Calu3 (cell line): ENCODE measurements at regions of chr9 and their contacts with region 1.

Region 1: DNA sequence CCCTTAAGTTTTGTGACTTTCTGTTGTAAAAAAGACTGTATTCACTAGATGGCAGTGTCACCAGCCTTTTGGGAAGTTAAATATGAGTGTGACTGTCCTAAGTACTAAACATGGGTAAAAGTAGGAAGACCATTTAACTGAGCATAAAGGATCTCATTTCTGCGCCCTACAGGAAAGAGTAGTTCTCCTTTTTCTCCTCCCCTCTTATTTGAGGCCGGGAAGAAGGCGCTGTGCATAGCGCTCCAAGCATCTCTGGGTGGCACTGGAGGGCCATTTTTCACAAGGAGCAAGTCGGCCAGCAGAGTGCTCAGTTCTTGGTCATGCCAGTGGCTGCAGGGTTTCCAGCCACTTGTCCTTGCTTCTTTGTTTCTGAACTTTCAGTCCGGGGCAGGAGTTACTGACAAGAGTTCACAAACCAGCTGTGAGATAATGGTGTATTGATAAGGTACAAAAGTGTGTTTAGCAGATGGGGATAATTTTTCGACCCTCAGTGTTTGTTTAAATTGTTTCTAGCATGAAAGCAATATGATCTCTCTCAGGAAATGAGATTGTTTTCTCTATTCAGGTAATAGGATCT is 227.6 kb upstream of the DMRT1 start:
- DNase-seq: peak; percentile 61
- H3K4me3 Mint-ChIP-seq: peak overlapping the region; percentile 28
- H3K27ac Mint-ChIP-seq: peak overlapping the region; percentile 61
- H3K4me1 Mint-ChIP-seq: no peaks in the 10 kb centered on the region
- H3K27me3 Mint-ChIP-seq: no peaks in the 10 kb centered on the region
- CTCF ChIP-seq: peak; percentile 41

Region 2: GRCh38 chr9:385818-386398 is 228.0 kb before region 1 on chr9:
- CTCF ChIA-PET with region 1: no interaction called
- intact Hi-C with region 1: loop called (anchors 2 kb)
- DNase-seq: peak; percentile 49
- H3K4me3 Mint-ChIP-seq: no peak overlapping the region
- H3K27ac Mint-ChIP-seq: no peak overlapping the region
- H3K4me1 Mint-ChIP-seq: no peaks in the 10 kb centered on the region
- H3K27me3 Mint-ChIP-seq: peaks cover 8% of the 10 kb centered on the region
- CTCF ChIP-seq: peak; percentile 64

Region 3: DNA sequence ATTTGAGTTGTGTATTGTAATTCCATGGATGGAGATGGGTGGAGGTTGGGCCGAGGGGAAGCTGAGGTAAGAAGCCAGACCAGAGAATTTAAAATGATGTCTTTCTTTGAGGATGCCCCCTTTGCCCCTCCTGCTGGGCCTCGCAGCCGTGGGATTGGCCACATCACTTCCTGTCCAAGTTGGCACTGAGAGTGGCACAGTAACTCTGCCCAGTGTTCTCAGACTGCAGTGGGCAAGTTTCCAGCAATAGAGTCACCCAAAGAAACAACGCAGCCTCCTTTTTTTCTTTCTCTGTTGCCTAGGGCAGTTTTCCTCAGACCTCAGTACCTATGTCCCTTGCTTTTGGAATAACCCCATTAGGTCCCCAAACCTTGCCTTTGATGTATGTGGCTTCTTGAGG is 79.0 kb before region 1 on chr9:
- CTCF ChIA-PET with region 1: no interaction called
- intact Hi-C with region 1: no loop called
- DNase-seq: no peak
- H3K4me3 Mint-ChIP-seq: no peak overlapping the region
- H3K27ac Mint-ChIP-seq: no peak overlapping the region
- H3K4me1 Mint-ChIP-seq: no peaks in the 10 kb centered on the region
- H3K27me3 Mint-ChIP-seq: no peaks in the 10 kb centered on the region
- CTCF ChIP-seq: no peak

Region 4: DNA sequence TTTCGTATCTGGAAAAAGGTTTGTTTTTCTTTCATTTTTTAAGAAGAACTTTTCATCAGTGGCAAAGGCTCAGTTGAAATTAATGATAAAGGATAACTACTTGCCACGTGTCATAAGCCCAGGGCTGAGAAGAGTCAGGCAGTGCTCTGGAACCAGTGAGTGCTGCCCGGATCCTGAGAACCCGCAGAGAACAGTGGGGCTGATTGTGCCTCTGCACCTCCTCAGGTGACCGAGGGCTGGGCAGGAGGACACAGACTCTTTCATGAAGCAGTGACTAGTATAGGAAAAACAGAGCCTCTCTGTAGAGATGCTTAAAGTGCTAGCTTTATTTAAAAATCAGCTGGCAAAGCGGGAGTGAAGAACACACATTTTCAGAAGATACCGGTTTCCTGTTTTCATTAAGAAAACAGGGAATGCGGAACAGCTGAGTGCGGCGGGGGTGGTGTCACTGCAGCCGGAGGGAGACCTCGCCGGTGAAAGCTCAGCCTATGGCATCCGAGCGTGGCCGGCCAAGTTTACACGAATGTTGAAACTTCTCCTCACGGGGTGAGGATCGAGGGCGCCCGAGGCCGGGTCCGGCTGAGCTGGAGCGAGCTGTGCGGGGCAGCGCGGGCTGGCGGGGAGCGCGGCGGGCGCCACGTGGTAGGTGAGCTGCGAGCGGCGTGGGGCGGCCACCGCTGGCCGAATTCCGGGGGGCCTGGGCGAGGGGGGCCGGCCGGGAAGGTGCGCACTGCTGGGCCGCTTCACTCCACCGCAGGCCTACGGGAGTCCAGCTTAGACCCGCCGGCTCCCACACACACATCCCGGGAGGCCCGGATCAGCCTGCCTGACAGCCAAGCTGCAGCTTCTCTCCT is 93.0 kb after region 1 on chr9:
- CTCF ChIA-PET with region 1: no interaction called
- intact Hi-C with region 1: loop called (anchors 5 kb)
- DNase-seq: peak; percentile 66
- H3K4me3 Mint-ChIP-seq: peak overlapping the region; percentile 74
- H3K27ac Mint-ChIP-seq: peak overlapping the region; percentile 81
- H3K4me1 Mint-ChIP-seq: peaks cover 13% of the 10 kb centered on the region
- H3K27me3 Mint-ChIP-seq: no peaks in the 10 kb centered on the region
- CTCF ChIP-seq: no peak

Region 5: DNA sequence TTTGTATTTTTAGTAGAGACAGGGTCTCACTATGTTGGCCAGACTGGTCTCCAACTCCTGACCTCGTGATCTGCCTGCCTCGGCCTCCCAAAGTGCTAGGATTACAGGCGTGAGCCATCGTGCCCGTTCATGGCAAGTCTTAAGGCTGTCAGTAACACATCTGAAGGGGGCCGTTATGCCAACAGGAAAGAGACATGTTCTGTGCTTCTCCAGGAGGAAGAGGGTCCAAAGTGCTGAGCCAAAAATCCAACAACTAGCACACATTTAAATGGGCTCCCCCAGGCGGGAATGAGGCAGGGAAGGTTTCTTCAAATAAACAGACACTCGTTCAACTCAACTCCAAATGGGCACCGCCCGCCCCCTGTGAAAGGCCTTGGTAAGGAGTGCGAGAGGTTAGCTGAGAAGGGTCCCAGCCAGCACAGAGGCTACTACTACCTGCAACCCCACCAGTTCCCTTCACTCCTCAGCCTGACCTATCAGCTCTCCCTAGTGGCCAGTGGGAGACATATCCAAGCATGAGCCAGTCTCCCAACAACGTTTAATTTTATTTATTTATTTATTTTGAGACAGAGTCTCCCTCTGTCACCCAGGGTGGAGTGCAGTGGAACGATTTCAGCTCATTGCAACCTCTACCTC is 143.5 kb after region 1 on chr9:
- CTCF ChIA-PET with region 1: no interaction called
- intact Hi-C with region 1: loop called (anchors 1 kb)
- DNase-seq: peak; percentile 28
- H3K4me3 Mint-ChIP-seq: no peak overlapping the region
- H3K27ac Mint-ChIP-seq: no peak overlapping the region
- H3K4me1 Mint-ChIP-seq: no peaks in the 10 kb centered on the region
- H3K27me3 Mint-ChIP-seq: peaks cover 18% of the 10 kb centered on the region
- CTCF ChIP-seq: peak; percentile 25

Region 6: GRCh38 chr9:763692-764524 is 150.0 kb after region 1 on chr9:
- CTCF ChIA-PET with region 1: no interaction called
- intact Hi-C with region 1: loop called (anchors 1 kb)
- DNase-seq: peak; percentile 75
- H3K4me3 Mint-ChIP-seq: no peak overlapping the region
- H3K27ac Mint-ChIP-seq: no peak overlapping the region
- H3K4me1 Mint-ChIP-seq: peaks cover 7% of the 10 kb centered on the region
- H3K27me3 Mint-ChIP-seq: peaks cover 40% of the 10 kb centered on the region
- CTCF ChIP-seq: peak; percentile 66

Region 7: GRCh38 chr9:806285-807156 is 192.7 kb after region 1 on chr9:
- CTCF ChIA-PET with region 1: interaction called, 3 read pairs
- intact Hi-C with region 1: loop called (anchors 1 kb)
- DNase-seq: peak; percentile 2
- H3K4me3 Mint-ChIP-seq: no peak overlapping the region
- H3K27ac Mint-ChIP-seq: no peak overlapping the region
- H3K4me1 Mint-ChIP-seq: no peaks in the 10 kb centered on the region
- H3K27me3 Mint-ChIP-seq: peaks cover 12% of the 10 kb centered on the region
- CTCF ChIP-seq: no peak

Region 8: DNA sequence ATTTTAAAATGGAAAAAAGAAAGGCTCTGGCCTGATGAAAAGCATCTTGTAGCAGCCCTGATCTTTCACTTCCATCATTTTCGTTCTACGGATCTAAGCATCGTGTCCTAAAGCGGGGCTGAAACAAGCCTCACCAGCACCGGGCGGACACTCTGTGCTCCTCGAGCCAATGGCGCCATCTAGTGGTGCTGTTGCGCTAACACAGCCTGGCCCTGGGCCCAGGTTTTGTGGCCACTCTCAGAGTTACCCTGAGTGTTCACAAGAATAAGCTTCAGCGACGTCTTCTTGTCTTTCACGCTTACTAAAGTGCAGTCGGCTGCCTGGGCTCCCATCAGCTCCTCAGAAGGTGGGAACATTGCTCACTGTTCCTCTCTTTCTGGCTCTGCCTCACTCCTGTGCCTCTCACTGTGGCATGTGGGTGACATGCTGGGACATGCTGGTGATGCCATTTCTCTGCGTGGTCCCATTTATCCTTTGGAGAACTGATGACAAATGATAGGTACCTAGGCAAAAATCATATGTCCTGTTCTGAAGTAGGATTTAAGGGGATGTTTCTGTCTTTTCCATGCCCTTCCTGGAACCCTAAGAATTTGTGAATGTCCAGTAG is 395.3 kb after region 1 on chr9:
- CTCF ChIA-PET with region 1: no interaction called
- intact Hi-C with region 1: loop called (anchors 10 kb)
- DNase-seq: peak; percentile 82
- H3K4me3 Mint-ChIP-seq: no peak overlapping the region
- H3K27ac Mint-ChIP-seq: no peak overlapping the region
- H3K4me1 Mint-ChIP-seq: no peaks in the 10 kb centered on the region
- H3K27me3 Mint-ChIP-seq: peaks cover 12% of the 10 kb centered on the region
- CTCF ChIP-seq: peak; percentile 77